Motor neuron (in vitro differentiated cells): ENCODE measurements at regions of chr12 and their contacts with region 1.

Region 1: GRCh38 chr12:122951979-122952892 is 14.0 kb downstream of the ABCB9 start:
- ATAC-seq: peak; percentile 90 to 100 (median 94)
- H3K4me3 ChIP-seq: no peak overlapping the region
- H3K27ac ChIP-seq: no peak overlapping the region
- H3K4me1 ChIP-seq: no peaks in the 10 kb centered on the region

Region 2: GRCh38 chr12:122793685-122794106 is 158.5 kb before region 1 on chr12:
- in situ Hi-C with region 1: loop called in 2 of 9 experiments (anchors 10 kb)
- ATAC-seq: peak in 7 of 8 experiments; percentile 25 to 83 (median 51)
- H3K4me3 ChIP-seq: no peak overlapping the region
- H3K27ac ChIP-seq: no peak overlapping the region
- H3K4me1 ChIP-seq: no peaks in the 10 kb centered on the region

Region 3: GRCh38 chr12:122851820-122852219 is 100.4 kb before region 1 on chr12:
- in situ Hi-C with region 1: loop called in 5 of 9 experiments (anchors 10 to 25 kb)
- ATAC-seq: peak in 2 of 8 experiments; percentile 61 to 86
- H3K4me3 ChIP-seq: no peak overlapping the region
- H3K27ac ChIP-seq: no peak overlapping the region
- H3K4me1 ChIP-seq: peaks cover 4 to 5% of the 10 kb centered on the region in 2 donors